A549 (cell line): ENCODE measurements at regions of chr15 and their contacts with region 1.

Region 1: GRCh38 chr15:32849769-32850668 is 132.2 kb downstream of the GREM1 start:
- DNase-seq: peak; percentile 59 to 87
- ATAC-seq: peak; percentile 78 to 83
- H3K4me3 ChIP-seq: no peak overlapping the region
- H3K27ac ChIP-seq: peak overlapping the region; percentile 79 to 86
- H3K4me1 ChIP-seq: peaks cover 56% of the 10 kb centered on the region
- CTCF ChIP-seq: no peak
- EP300 ChIP-seq: peak; percentile 96 to 97
- POLR2A ChIP-seq: no peak
- RAD21 ChIP-seq: peak; percentile 14 to 71; a peak in 3 of 5 replicates

Region 2: GRCh38 chr15:32833379-32833821 is 16.6 kb before region 1 on chr15:
- CTCF ChIA-PET with region 1: interaction called, 47 read pairs
- POLR2A ChIA-PET with region 1: interaction called, 8 read pairs
- DNase-seq: no peak
- ATAC-seq: no peak
- H3K4me3 ChIP-seq: no peak overlapping the region
- H3K27ac ChIP-seq: peak overlapping the region in 1 of 2 experiments; percentile 20; a peak in 2 of 6 replicates
- H3K4me1 ChIP-seq: peaks cover 36% of the 10 kb centered on the region
- CTCF ChIP-seq: no peak
- EP300 ChIP-seq: no peak
- POLR2A ChIP-seq: no peak
- RAD21 ChIP-seq: no peak